HEK293 (cell line): ENCODE measurements at regions of chr15 and their contacts with region 1.

Region 1: GRCh38 chr15:72272213-72273002 is at the start of gene PARP6:
- H3K4me3 ChIP-seq: peak within 1 kb of the TSS; percentile 82
- H3K27ac ChIP-seq: peak within 1 kb of the TSS; percentile 88
- H3K4me1 ChIP-seq: peaks cover 6% of the 10 kb centered on the region; the same call in 1 of the 2 replicates
- CTCF ChIP-seq: peak; percentile 99

Region 2: GRCh38 chr15:72285927-72286516 is 13.6 kb after region 1 on chr15:
- CTCF ChIA-PET with region 1: interaction called, 18 read pairs
- POLR2A ChIA-PET with region 1: no interaction called
- H3K4me3 ChIP-seq: no peak overlapping the region
- H3K27ac ChIP-seq: no peak overlapping the region
- H3K4me1 ChIP-seq: no peaks in the 10 kb centered on the region
- CTCF ChIP-seq: peak; percentile 37; the same call in 1 of the 2 replicates

Region 3: DNA sequence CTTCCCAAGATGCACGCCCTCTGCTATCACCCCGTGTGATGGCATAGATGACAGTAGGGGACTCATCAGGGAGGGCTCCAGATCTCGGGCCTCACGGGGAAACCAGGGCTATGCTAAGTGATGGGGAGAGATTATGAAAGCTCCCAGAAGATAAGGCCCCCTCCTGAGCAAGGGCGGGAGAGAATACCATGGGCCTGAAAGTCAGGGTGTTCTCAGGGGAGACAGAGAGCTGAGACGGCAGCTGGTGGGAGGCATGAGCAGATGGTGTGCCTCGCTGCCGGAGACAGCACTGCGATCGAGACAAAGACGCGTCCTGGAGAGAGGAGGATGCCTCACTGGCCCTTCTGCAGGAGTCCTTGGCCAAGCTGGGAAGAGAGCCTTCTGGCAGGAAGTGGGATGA is 617.6 kb after region 1 on chr15:
- CTCF ChIA-PET with region 1: no interaction called
- POLR2A ChIA-PET with region 1: no interaction called
- H3K4me3 ChIP-seq: no peak overlapping the region
- H3K27ac ChIP-seq: no peak overlapping the region
- H3K4me1 ChIP-seq: no peaks in the 10 kb centered on the region
- CTCF ChIP-seq: no peak